ENCODE measurements at regions of chr19 and their contacts with region 1.

Region 1: GRCh38 chr19:11496391-11497163 is 9.1 kb downstream of the ZNF653 start:
- DNase-seq: peak; percentile 21
- H3K4me3 ChIP-seq: no peak overlapping the region
- H3K27ac ChIP-seq: no peak overlapping the region
- H3K4me1 ChIP-seq: no peaks in the 10 kb centered on the region
- H3K27me3 ChIP-seq: no peaks in the 10 kb centered on the region
- CTCF ChIP-seq: peak in 3 of 4 experiments; percentile 38 to 52 (median 44)
- POLR2A ChIP-seq: no peak

Region 2: GRCh38 chr19:11346092-11346940 is 150.3 kb before region 1 on chr19 and contains the starts of genes CCDC159 and TMEM205:
- intact Hi-C with region 1: no loop called
- DNase-seq: peak; percentile 99
- H3K4me3 ChIP-seq: peak within 1 kb of the TSS; percentile 49 to 66
- H3K27ac ChIP-seq: peak within 1 kb of the TSS; percentile 83 to 88
- H3K4me1 ChIP-seq: peaks cover 17% of the 10 kb centered on the region
- H3K27me3 ChIP-seq: no peaks in the 10 kb centered on the region
- CTCF ChIP-seq: peak in 1 of 4 experiments; percentile 14
- POLR2A ChIP-seq: peak; percentile 88
- total RNA-seq, gene CCDC159: 51.5 to 52.4 TPM
- total RNA-seq, gene TMEM205: 219 to 541 TPM

Region 3: GRCh38 chr19:11587302-11587974 is 90.9 kb after region 1 on chr19:
- intact Hi-C with region 1: loop called (anchors 5 kb)
- DNase-seq: peak; percentile 59
- H3K4me3 ChIP-seq: no peak overlapping the region
- H3K27ac ChIP-seq: no peak overlapping the region
- H3K4me1 ChIP-seq: no peaks in the 10 kb centered on the region
- H3K27me3 ChIP-seq: no peaks in the 10 kb centered on the region
- CTCF ChIP-seq: peak; percentile 53 to 95 (median 84)
- POLR2A ChIP-seq: no peak

Region 4: GRCh38 chr19:11597202-11598102 is 100.9 kb after region 1 on chr19 and contains the start of gene ZNF627:
- intact Hi-C with region 1: no loop called
- DNase-seq: peak; percentile 99
- H3K4me3 ChIP-seq: peak within 1 kb of the TSS; percentile 88 to 99
- H3K27ac ChIP-seq: peak within 1 kb of the TSS; percentile 96 to 97
- H3K4me1 ChIP-seq: peaks cover 2% of the 10 kb centered on the region
- H3K27me3 ChIP-seq: no peaks in the 10 kb centered on the region
- CTCF ChIP-seq: peak in 3 of 4 experiments; percentile 11 to 64 (median 40)
- POLR2A ChIP-seq: peak; percentile 97
- total RNA-seq, gene ZNF627: 17.8 to 20.5 TPM